PC-9 (cell line): ENCODE measurements at regions of chr2 and their contacts with region 1.

Region 1: DNA sequence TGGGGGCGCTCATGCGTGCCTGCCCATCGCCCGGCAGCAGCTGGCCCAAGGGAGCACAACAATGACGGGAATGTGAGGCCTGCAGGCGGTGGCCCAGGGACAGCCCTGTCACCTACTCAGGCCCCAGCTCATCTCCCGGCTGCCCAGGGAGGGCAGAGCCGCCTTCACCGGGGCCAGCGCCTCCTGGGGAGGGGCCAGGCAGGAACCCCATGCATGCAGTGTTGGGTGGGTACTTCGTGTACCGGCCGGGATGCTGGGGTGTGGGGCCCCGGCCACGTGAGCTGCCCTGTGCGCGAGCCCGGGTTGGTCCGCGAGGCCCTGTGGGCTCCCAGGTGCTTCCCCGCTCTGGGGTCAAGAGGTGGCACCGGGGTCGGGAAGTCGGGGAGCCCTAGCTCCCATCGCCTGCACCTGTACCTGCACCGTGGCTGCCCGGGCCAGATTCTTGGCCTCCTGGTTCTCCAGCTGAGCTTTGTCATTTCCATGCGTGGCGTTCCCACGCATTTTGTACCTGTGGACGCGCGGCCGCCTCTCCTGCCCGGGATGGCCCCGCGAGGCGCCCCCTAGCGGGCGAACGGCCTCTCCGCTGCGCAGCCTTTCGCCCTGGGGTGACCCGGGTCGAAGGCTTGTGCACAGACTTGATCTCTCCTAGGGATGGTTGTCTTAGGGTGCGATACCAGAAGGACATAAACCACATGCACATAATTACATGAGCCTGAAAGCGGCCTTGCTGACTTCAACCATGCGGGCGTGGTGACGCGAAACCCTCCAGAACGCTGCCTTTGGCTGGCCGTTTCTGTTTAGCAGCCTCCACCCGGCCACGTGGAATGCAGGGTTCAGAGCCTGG is 950 bp downstream of the KLHL30 start:
- DNase-seq: peak in 1 of 2 experiments; percentile 64
- H3K4me3 ChIP-seq: no peak overlapping the region
- H3K27ac ChIP-seq: no peak overlapping the region
- H3K4me1 ChIP-seq: peaks cover 64% of the 10 kb centered on the region
- H3K27me3 ChIP-seq: no peaks in the 10 kb centered on the region
- CTCF ChIP-seq: peak; percentile 47

Region 2: DNA sequence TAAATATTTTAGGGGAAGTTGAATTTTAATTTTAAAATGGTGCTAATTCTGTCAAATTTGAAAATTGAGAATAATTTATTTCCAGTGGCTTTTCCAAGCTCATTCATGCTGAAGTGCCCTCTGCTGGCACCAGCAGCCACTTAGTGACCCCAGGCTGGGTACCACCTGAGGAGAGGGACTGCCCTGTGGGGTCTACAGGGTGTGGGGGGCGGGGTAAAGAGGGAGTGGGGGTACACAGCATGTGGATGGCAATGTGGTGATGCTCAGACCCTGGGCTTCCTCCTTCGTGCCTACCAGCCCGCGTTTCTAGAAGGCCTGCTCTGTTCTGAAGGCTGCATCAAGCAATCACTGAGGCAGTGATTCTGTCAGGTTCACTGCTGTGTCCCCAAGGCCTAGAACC is 123.7 kb before region 1 on chr2:
- CTCF ChIA-PET with region 1: no interaction called
- POLR2A ChIA-PET with region 1: no interaction called
- intact Hi-C with region 1: no loop called
- DNase-seq: no peak
- H3K4me3 ChIP-seq: no peak overlapping the region
- H3K27ac ChIP-seq: no peak overlapping the region
- H3K4me1 ChIP-seq: no peaks in the 10 kb centered on the region
- H3K27me3 ChIP-seq: no peaks in the 10 kb centered on the region
- CTCF ChIP-seq: peak; percentile 52

Region 3: GRCh38 chr2:238097998-238098871 is 41.2 kb before region 1 on chr2:
- CTCF ChIA-PET with region 1: no interaction called
- POLR2A ChIA-PET with region 1: no interaction called
- intact Hi-C with region 1: no loop called
- DNase-seq: peak; percentile 72 to 88
- H3K4me3 ChIP-seq: no peak overlapping the region
- H3K27ac ChIP-seq: no peak overlapping the region
- H3K4me1 ChIP-seq: peaks cover 10% of the 10 kb centered on the region
- H3K27me3 ChIP-seq: no peaks in the 10 kb centered on the region
- CTCF ChIP-seq: no peak

Region 4: DNA sequence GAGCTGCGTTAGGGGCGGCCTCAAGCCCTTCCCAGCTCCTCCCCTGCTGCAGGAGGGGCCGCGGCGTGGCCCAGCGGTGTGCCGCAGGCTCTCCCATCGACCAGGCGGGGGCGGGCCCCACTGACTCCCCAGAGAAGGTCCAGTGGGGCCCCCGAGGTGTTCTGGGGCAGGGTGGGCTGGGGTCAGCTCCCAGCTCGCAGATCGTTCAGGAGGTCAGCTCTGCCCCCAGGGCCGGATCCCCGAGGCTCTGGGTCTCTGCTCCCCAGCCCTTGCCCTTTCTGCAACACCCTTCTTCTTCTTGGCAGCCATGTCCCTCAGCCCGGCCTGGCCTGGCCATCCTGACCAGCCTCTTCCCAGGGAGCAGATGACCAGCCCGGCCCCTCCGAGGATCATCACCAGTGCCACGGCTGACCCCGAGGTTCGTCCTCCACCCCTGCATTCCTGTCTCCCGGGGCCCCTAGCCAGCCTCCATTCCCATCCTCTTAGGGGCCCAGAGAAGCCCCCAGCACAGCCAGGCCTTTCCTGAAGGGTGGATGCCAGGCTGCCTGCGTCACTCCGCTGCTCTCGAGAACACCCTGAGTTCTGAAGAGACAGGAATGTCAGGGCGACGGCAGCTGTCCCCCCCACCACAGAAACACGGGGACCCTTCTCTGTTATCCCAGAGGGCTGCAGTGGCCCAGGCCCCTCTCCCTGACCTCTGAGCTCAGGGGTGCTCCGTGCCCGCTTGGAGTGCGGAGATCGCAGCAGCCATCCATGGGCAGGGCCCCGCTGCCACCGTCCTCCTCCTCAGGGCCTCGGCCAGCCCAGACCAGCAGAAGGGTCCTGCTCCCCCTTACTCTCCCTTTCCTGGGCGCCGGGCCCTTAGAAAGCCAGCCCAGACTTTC is 11.9 kb before region 1 on chr2:
- CTCF ChIA-PET with region 1: interaction called, 13 read pairs
- POLR2A ChIA-PET with region 1: no interaction called
- intact Hi-C with region 1: no loop called
- DNase-seq: peak in 1 of 2 experiments; percentile 65
- H3K4me3 ChIP-seq: no peak overlapping the region
- H3K27ac ChIP-seq: no peak overlapping the region
- H3K4me1 ChIP-seq: no peaks in the 10 kb centered on the region
- H3K27me3 ChIP-seq: peaks cover 15% of the 10 kb centered on the region
- CTCF ChIP-seq: no peak

Region 5: DNA sequence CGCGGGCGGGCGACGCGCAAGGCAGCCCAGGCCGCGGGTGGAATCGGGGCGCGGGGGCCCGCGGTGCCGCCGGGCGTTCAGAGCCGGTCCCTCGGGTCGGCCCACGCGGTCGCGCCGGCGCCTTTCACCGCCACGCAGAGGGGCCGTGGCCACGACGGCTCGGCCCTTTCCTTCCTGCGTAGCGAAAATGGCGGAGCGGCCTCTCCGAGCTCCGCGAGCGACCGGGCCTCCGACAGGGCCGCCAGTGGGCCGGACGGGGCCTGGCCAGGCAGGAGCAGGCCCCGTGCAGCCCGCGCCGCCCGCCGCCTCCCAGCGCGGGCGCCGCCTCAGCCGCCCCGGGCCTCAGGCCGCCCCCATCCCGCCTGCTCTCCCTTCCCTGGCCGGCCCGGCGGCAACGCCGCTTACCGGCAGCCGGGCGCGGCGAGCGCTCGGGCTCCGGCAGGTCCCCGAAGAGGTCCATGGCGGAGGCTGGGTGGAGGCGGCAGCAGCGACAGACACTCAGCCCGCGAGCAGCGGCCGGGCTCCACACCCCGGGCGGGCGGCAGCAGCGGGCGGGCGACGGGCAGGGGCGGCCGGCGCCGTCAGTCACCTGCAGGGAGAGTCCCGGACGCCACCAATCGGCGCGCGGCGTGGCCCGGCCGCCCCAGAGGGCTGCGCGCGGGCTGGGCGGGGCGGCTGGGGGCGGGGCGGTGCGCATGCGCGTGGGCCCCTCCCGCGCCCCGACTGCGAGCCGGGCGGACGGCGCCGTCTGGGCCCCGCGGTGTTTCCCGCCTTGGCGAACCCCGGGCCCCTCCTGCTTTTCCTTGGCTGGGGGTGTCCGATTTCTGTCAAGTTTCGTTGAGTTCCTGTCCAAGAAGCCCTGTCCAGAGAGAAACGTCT is 63.9 kb after region 1 on chr2 and contains the start of gene ILKAP:
- CTCF ChIA-PET with region 1: no interaction called
- POLR2A ChIA-PET with region 1: interaction called, 13 read pairs
- intact Hi-C with region 1: no loop called
- DNase-seq: peak; percentile 59 to 96
- H3K4me3 ChIP-seq: peak within 1 kb of the TSS; percentile 92
- H3K27ac ChIP-seq: no peak within 1 kb of the TSS
- H3K4me1 ChIP-seq: peaks cover 33% of the 10 kb centered on the region
- H3K27me3 ChIP-seq: peaks cover 21% of the 10 kb centered on the region
- CTCF ChIP-seq: no peak
- total RNA-seq, gene ILKAP: 55.6 and 65.2 TPM in 2 replicates

Region 6: GRCh38 chr2:238239872-238240751 is 100.7 kb after region 1 on chr2 and contains the start of gene HES6:
- CTCF ChIA-PET with region 1: no interaction called
- POLR2A ChIA-PET with region 1: interaction called, 3 read pairs
- intact Hi-C with region 1: loop called (anchors 10 kb)
- DNase-seq: peak; percentile 82 to 94
- H3K4me3 ChIP-seq: peak within 1 kb of the TSS; percentile 63
- H3K27ac ChIP-seq: no peak within 1 kb of the TSS
- H3K4me1 ChIP-seq: no peaks in the 10 kb centered on the region; the same call in 1 of the 2 replicates
- H3K27me3 ChIP-seq: peaks cover 30% of the 10 kb centered on the region
- CTCF ChIP-seq: no peak
- total RNA-seq, gene HES6: 8.4 and 14.3 TPM in 2 replicates